ENCODE measurements at regions of chrX and their contacts with region 1.

Region 1: GRCh38 chrX:130097507-130098209 is 12.6 kb downstream of the ELF4 start:
- DNase-seq: peak in 3 of 10 donors; percentile 27 to 44 (median 41)
- ATAC-seq: peak; percentile 80 to 91
- H3K4me3 Mint-ChIP-seq: peak overlapping the region in 9 of 10 donors; percentile 16 to 81 (median 65)
- H3K27ac Mint-ChIP-seq: peak overlapping the region; percentile 41 to 92 (median 86)
- H3K4me1 Mint-ChIP-seq: peaks cover 18 to 82% (median 61%) of the 10 kb centered on the region in 4 donors
- H3K27me3 Mint-ChIP-seq: no peaks in the 10 kb centered on the region

Region 2: GRCh38 chrX:130086447-130087206 is 11.0 kb before region 1 on chrX:
- POLR2A ChIA-PET with region 1: interaction called, 16 read pairs
- DNase-seq: peak in 9 of 10 donors; percentile 46 to 85 (median 68)
- ATAC-seq: peak; percentile 75 to 76
- H3K4me3 Mint-ChIP-seq: peak overlapping the region; percentile 82 to 94 (median 88)
- H3K27ac Mint-ChIP-seq: peak overlapping the region; percentile 64 to 97 (median 92)
- H3K4me1 Mint-ChIP-seq: peaks cover 13 to 88% (median 49%) of the 10 kb centered on the region in 4 donors
- H3K27me3 Mint-ChIP-seq: no peaks in the 10 kb centered on the region

Region 3: DNA sequence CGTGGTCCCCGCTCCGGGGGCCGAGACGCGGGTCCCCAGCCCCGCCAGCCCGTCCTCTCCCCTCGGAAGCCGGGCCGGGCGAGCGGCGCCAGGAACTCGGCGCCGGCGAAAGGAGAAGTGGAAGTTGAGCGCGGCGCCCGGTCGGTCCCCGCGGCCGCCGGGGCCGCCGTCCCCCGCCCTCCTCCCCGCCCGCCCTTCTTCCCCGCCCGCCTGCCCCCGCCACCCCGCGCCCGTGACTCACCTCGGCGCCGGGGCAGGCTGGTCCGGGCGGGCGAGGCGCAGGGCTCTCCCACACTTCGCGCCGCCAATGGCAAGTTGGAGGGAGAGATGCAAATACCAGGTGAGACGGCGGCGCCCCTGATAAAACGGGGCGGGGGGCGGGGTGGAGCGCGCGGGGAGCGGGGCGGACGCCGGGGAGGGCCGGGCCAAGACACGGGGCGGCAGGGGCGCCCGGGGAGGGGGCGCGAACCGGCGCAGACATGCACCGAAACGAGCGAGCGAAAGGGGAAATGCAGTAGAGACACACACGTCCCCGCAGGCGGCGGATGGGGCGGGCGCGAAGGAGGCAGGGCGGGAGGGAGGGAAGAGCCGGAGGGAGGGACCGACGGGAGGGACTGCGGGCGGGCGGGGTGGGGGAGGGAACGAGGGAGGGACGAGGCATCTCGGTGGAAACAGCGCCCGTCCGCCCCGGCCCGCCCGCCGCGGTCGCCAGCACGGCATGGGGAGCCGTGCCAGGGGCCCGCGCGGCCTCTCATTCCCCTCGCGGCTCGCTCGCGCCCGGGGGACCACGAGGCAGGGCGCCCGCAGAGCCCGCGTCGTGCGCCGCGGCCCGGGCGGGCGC is 12.9 kb after region 1 on chrX and contains the start of gene ELF4:
- POLR2A ChIA-PET with region 1: interaction called, 33 read pairs
- DNase-seq: peak in 8 of 10 donors; percentile 20 to 73 (median 38)
- ATAC-seq: peak; percentile 62 to 77
- H3K4me3 Mint-ChIP-seq: peak within 1 kb of the TSS; percentile 81 to 92 (median 90)
- H3K27ac Mint-ChIP-seq: peak within 1 kb of the TSS in 9 of 10 donors; percentile 37 to 93 (median 86)
- H3K4me1 Mint-ChIP-seq: peaks cover 6 to 42% (median 32%) of the 10 kb centered on the region in 4 donors
- H3K27me3 Mint-ChIP-seq: no peaks in the 10 kb centered on the region
- polyA plus RNA-seq, gene ELF4: 7.7 to 10.9 (median 9.2) TPM

Region 4: DNA sequence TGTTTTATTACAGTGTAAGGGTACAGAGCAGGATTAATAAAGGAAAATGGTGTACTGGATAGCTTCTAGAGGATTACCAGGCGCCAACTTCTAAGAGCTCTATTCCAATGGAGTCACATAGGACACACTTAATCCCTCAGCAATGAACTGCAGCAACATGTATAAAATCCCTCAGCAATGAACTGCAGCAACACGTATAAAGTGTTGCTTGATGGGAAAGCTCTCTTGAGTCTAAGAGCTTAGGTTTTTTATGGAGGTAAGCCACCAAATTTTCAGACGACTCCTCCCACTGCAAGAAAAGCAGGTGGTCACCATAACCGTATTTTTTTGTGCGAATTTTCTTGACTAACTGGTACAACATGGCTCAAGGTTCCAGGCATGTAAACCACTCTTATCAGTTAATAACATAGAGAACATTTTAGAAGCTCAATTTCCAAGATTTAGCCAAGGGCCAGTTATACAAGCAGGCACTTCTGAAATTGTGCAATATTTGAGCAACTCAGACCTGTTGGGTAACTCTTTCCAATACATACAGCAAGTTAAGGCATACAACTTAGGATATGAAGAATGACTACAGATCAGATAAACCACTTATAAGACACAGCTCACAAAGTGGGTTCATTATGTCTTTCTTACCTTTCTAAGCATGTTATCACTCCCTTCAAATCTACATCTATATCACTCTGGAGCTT is 127.0 kb after region 1 on chrX:
- POLR2A ChIA-PET with region 1: no interaction called
- DNase-seq: no peak
- ATAC-seq: no peak
- H3K4me3 Mint-ChIP-seq: no peak overlapping the region
- H3K27ac Mint-ChIP-seq: no peak overlapping the region
- H3K4me1 Mint-ChIP-seq: peaks cover 0 to 1% (median under 1%) of the 10 kb centered on the region in 4 donors
- H3K27me3 Mint-ChIP-seq: no peaks in the 10 kb centered on the region

Measured in naive thymus-derived CD8-positive, alpha-beta T cell (primary cell).